Esophagus muscularis mucosa (tissue), 4 donors: ENCODE measurements at regions of chr7 and their contacts with region 1.

Region 1: GRCh38 chr7:130982160-130982638 is 248.2 kb upstream of the KLF14 start:
- DNase-seq: no peak
- H3K4me3 ChIP-seq: no peak overlapping the region
- H3K27ac ChIP-seq: peak overlapping the region in 3 of 4 donors; percentile 26 to 45 (median 44)
- H3K4me1 ChIP-seq: peaks cover 46 to 71% (median 66%) of the 10 kb centered on the region in 4 donors
- H3K27me3 ChIP-seq: no peaks in the 10 kb centered on the region
- CTCF ChIP-seq: peak; percentile 59 to 68 (median 62)
- EP300 ChIP-seq: no peak
- POLR2A ChIP-seq: no peak

Region 2: DNA sequence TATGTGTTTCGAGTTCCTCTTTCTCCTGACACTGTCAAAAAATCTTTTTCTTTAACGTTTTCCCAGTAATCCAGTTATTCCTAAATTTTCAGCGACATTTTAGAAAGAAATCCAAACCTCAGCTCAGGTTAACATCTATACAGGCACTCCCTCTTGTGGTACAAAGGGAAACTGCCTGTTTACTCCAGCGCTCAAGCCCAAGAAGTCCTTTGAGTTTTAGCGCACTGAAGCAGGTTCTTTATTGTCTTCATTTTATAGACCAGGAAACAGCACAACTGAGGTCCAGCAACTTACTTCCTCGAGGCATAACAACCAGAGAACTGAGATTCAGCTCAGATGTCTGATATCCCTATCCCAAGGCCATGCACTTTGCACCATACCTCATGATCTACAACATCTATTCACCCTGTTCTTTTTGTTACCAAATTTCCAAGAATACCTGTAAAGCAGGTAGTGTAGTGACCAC is 58.3 kb after region 1 on chr7:
- intact Hi-C with region 1: loop called (anchors 5 kb)
- DNase-seq: no peak
- H3K4me3 ChIP-seq: no peak overlapping the region
- H3K27ac ChIP-seq: peak overlapping the region; percentile 25 to 49 (median 40)
- H3K4me1 ChIP-seq: peaks cover 29 to 75% (median 52%) of the 10 kb centered on the region in 4 donors
- H3K27me3 ChIP-seq: no peaks in the 10 kb centered on the region
- CTCF ChIP-seq: peak; percentile 89 to 94 (median 92)
- EP300 ChIP-seq: no peak
- POLR2A ChIP-seq: no peak